ENCODE measurements at regions of chr13 and their contacts with region 1.

Region 1: GRCh38 chr13:108155185-108156106 is 59.9 kb downstream of the LIG4 start:
- DNase-seq: no peak
- H3K4me3 ChIP-seq: no peak overlapping the region
- H3K27ac ChIP-seq: no peak overlapping the region
- H3K4me1 ChIP-seq: no peaks in the 10 kb centered on the region
- H3K27me3 ChIP-seq: no peaks in the 10 kb centered on the region
- CTCF ChIP-seq: peak; percentile 56 to 88 (median 78)
- EP300 ChIP-seq: no peak
- POLR2A ChIP-seq: no peak

Region 2: DNA sequence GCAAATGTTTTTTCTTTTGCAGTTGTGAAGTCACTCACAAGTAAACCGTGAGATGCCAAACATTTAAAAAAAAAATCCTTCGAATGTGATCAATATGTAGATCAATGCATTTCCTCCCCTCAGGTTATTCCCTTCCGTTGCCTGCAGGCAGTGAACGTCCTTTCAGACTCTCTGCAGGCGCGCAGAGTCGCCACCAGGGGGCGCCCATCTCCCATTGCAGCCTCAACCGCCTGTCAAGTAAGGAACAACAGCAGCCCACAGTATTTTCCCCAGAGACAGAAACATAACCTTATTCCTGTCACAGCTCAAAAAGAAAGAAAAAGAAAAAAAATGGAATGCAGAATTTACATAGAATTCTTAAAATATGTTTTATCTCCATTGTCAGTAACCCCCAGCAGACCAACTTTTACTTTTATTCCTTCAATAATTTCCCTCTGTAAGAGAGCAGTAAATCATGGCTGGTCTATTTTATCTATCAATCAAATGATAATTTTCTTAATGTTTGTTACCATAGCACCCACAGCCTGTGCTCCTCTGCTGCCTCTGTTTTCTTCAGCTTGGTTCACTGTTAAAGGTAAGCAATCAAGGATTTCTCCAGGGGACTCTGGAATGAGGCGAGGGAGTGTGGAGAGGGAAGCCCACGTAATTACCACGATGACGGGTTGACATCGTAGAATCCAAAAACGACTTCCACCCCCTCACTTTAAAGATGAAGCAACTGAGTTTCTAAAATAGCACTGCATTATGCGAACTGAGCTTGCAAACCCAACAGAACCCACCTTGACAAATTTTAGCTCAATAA is 949.9 kb before region 1 on chr13:
- intact Hi-C with region 1: loop called (anchors 5 kb)
- DNase-seq: no peak
- H3K4me3 ChIP-seq: no peak overlapping the region
- H3K27ac ChIP-seq: no peak overlapping the region
- H3K4me1 ChIP-seq: peaks cover 0 to 21% (median 6%) of the 10 kb centered on the region in 4 donors
- H3K27me3 ChIP-seq: peaks cover 0 to 14% (median 0%) of the 10 kb centered on the region in 4 donors
- CTCF ChIP-seq: peak; percentile 79 to 99 (median 92)
- EP300 ChIP-seq: no peak
- POLR2A ChIP-seq: no peak

Region 3: GRCh38 chr13:108332791-108333190 is 177.3 kb after region 1 on chr13:
- intact Hi-C with region 1: no loop called
- DNase-seq: no peak
- H3K4me3 ChIP-seq: no peak overlapping the region
- H3K27ac ChIP-seq: no peak overlapping the region
- H3K4me1 ChIP-seq: no peaks in the 10 kb centered on the region
- H3K27me3 ChIP-seq: peaks cover 0 to 13% (median 0%) of the 10 kb centered on the region in 4 donors
- CTCF ChIP-seq: no peak
- EP300 ChIP-seq: no peak
- POLR2A ChIP-seq: no peak